Activated naive CD4-positive, alpha-beta T cell treated with anti-CD3 and anti-CD28 coated beads, Interleukin-2, amount 10 ng/mL, durations not matched to agents 7 days and 5 days (primary cell): ENCODE measurements at regions of chr20 and their contacts with region 1.

Region 1: GRCh38 chr20:45044084-45044573 is 56.8 kb downstream of the KCNS1 start:
- DNase-seq: peak; percentile 43
- H3K4me3 Mint-ChIP-seq: no peak overlapping the region
- H3K27ac Mint-ChIP-seq: peak overlapping the region; percentile 67
- H3K4me1 Mint-ChIP-seq: peaks cover 47% of the 10 kb centered on the region
- H3K27me3 Mint-ChIP-seq: no peaks in the 10 kb centered on the region

Region 2: DNA sequence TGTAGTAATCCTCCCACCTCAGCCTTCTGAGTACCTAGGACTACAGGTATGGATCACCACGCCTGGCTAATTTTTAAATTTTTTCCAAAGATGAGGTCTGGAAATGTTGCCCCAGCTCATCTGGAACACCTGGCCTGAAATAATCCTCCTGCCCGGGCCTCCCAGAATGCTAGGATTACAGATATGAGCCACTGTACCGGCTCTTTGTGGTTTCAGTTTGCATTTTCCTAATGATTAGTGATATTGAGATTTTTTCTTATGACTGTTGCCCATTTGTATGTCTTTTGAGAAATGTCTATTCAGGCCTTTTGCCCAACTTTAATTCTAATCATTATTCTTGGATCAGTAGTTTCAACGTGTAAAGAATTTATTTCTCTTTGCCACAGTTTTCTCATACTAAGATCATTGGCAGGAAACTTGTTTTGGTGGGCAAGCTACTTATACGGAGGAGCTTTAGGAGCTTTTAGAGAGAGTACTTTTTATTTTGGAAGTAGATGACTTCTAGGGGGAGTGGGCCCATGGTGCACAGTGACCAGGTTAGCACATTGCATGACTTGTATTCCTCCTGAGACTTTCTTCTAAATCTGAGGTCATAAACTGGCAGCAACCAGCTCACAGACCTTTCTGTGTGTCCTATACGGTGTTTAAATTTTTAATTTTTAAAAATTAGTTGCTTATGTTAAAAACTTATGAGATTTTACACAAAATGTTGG is 15.5 kb before region 1 on chr20:
- CTCF ChIA-PET with region 1: interaction called, 11 read pairs
- DNase-seq: no peak
- H3K4me3 Mint-ChIP-seq: no peak overlapping the region
- H3K27ac Mint-ChIP-seq: no peak overlapping the region
- H3K4me1 Mint-ChIP-seq: peaks cover 30% of the 10 kb centered on the region
- H3K27me3 Mint-ChIP-seq: no peaks in the 10 kb centered on the region

Region 3: GRCh38 chr20:45111799-45112471 is 67.8 kb after region 1 on chr20:
- CTCF ChIA-PET with region 1: interaction called, 32 read pairs
- DNase-seq: no peak
- H3K4me3 Mint-ChIP-seq: no peak overlapping the region
- H3K27ac Mint-ChIP-seq: no peak overlapping the region
- H3K4me1 Mint-ChIP-seq: no peaks in the 10 kb centered on the region
- H3K27me3 Mint-ChIP-seq: peaks cover 60% of the 10 kb centered on the region